Naive thymus-derived CD4-positive, alpha-beta T cell (primary cell): ENCODE measurements at regions of chr4 and their contacts with region 1.

Region 1: GRCh38 chr4:26860157-26860921 is at the start of gene STIM2:
- DNase-seq: peak; percentile 95 to 100 (median 99)
- ATAC-seq: peak; percentile 80
- H3K4me3 ChIP-seq: peak within 1 kb of the TSS; percentile 77
- H3K4me3 Mint-ChIP-seq: peak within 1 kb of the TSS; percentile 95 to 100 (median 98)
- H3K27ac ChIP-seq: peak within 1 kb of the TSS; percentile 91
- H3K27ac Mint-ChIP-seq: peak within 1 kb of the TSS; percentile 95 to 99 (median 98)
- H3K4me1 ChIP-seq: peaks cover 46 to 48% of the 10 kb centered on the region in 2 donors
- H3K4me1 Mint-ChIP-seq: peaks cover 47 to 71% (median 66%) of the 10 kb centered on the region in 7 donors
- H3K27me3 ChIP-seq: no peaks in the 10 kb centered on the region
- H3K27me3 Mint-ChIP-seq: peaks cover 0 to 3% (median 0%) of the 10 kb centered on the region in 5 donors
- total RNA-seq, gene STIM2: 61.7 to 103 (median 74.5) TPM

Region 2: DNA sequence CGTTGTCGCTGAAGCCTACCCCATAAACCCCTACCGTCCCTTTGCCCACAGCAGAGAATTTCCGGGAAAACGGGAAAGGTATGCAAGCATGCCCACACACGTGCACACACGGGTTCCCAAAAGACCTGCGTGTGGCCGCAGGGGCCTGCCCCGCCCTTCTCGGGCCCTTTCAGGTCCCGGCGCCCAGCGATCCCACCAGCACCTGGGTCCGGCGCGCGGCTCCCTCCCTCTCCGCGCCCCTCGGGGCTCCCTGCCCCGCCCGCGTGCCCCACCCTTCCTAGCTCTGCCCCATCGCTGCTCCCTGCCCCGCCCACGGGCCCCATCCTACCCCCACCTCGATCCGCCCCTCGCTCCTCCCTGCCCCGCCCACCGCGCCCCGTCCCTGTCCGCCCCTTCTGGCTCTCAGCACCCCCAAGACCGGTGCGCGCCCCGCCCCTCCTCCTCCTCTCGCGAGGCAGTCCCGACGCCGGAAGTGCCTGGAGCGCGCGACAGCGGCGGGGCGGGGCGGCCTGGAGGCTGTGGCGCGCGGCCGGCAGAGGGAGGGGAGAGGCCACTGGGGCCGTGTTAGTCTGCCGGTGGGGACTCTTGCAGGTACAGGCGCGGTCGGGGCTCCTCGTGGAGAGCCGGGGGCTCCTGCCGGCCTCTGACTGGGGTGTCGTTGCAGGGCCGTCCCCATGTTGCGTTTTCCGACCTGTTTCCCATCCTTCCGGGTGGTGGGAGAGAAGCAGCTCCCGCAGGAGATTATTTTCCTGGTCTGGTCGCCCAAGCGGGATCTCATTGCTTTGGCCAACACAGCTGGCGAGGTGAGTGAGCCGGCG is 1483.4 kb before region 1 on chr4 and contains the start of gene ANAPC4:
- CTCF ChIA-PET with region 1: no interaction called
- POLR2A ChIA-PET with region 1: no interaction called
- intact Hi-C with region 1: loop called (anchors 1 to 2 kb)
- DNase-seq: peak; percentile 85 to 97 (median 92)
- ATAC-seq: peak; percentile 97
- H3K4me3 ChIP-seq: peak within 1 kb of the TSS; percentile 96
- H3K4me3 Mint-ChIP-seq: peak within 1 kb of the TSS in 2 of 10 donors; percentile 78 to 83
- H3K27ac ChIP-seq: peak within 1 kb of the TSS; percentile 76
- H3K27ac Mint-ChIP-seq: peak within 1 kb of the TSS in 7 of 9 donors; percentile 64 to 93 (median 83)
- H3K4me1 ChIP-seq: peaks cover 11 to 17% of the 10 kb centered on the region in 2 donors
- H3K4me1 Mint-ChIP-seq: peaks cover 0 to 18% (median 13%) of the 10 kb centered on the region in 7 donors
- H3K27me3 ChIP-seq: no peaks in the 10 kb centered on the region
- H3K27me3 Mint-ChIP-seq: no peaks in the 10 kb centered on the region
- total RNA-seq, gene ANAPC4: 40.6 to 55.3 (median 50.4) TPM

Region 3: DNA sequence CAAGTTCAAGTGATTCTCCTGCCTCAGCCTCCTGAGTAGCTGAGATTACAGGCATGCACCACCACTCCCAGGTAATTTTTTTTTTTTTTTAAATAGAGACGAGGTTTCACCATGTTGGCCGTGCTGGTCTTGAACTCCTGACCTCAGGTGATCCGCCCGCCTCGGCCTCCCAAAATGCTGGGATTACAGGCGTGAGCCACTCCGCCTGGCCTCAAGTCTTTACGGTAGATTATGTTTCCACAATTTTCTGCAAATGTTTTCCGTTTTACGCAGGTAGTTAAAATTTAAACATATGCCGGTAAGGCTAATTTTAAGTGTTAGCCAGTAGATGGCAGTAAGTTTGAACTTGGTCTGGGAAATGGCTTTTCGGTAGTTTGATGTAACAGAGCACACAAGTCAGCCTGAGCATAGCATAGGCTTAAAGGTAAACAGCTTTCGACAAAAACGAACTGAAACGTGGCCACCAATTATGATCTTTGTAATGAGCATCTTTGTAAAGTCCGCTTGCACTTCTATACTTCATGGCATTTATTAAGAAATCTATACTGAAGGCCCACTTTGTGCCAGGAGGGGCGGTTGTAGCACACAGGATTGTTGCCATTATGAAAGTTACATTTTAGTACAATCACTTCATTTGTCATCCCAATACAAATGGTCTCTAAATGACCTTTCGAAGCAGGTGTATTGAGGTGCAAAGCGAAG is 401.1 kb before region 1 on chr4:
- CTCF ChIA-PET with region 1: no interaction called
- POLR2A ChIA-PET with region 1: no interaction called
- intact Hi-C with region 1: loop called in 1 of 2 experiments (anchors 2 kb)
- DNase-seq: peak in 7 of 9 donors; percentile 15 to 62 (median 51)
- ATAC-seq: peak; percentile 62
- H3K4me3 ChIP-seq: no peak overlapping the region
- H3K4me3 Mint-ChIP-seq: peak overlapping the region in 9 of 10 donors; percentile 21 to 82 (median 61)
- H3K27ac ChIP-seq: no peak overlapping the region
- H3K27ac Mint-ChIP-seq: peak overlapping the region in 5 of 9 donors; percentile 5 to 68 (median 60)
- H3K4me1 ChIP-seq: peaks cover 0 to 16% of the 10 kb centered on the region in 2 donors
- H3K4me1 Mint-ChIP-seq: peaks cover 0 to 30% (median 20%) of the 10 kb centered on the region in 7 donors
- H3K27me3 ChIP-seq: no peaks in the 10 kb centered on the region
- H3K27me3 Mint-ChIP-seq: no peaks in the 10 kb centered on the region

Region 4: DNA sequence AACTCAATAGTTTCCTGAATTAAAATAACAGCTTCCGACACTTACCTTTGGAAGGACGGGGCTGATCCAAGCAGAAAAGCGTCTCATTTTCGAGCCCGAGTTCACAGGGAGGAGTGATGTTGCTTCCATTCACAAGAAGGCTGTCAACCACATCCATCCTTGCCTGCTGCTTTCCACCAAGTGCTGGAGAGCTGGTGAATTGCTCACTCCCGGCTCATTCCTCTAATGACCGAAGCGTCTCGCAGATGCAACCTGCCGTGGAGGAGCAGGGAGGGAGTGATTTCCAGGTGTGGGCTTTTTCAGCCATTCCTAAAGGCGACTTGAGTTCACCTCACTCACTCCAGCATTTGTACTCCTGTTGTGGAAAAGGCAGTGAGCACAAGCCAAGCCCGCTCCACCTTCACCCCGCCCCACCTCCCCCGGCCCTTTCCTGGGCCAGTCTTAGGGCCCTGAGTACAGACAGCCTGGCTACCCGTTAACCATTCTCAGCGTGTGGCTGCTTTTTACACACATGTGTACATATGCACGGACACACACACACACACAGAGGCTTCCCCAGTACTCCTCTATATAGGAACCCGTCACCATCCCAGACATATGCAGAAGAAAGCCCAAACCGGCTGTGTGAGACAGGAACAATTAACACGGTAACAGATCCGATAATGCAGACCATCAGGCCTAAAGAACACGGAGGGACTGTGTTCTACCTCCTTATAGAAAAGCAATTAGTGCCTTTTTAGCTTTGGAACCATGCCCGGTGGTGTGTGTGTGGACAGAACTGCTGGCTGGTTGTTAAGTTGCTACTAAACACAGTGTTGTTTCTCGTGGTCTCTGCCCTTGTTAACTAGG is 370.0 kb before region 1 on chr4 and contains the start of gene CCKAR:
- CTCF ChIA-PET with region 1: no interaction called
- POLR2A ChIA-PET with region 1: no interaction called
- intact Hi-C with region 1: no loop called
- DNase-seq: no peak
- ATAC-seq: no peak
- H3K4me3 ChIP-seq: no peak within 1 kb of the TSS
- H3K4me3 Mint-ChIP-seq: no peak within 1 kb of the TSS
- H3K27ac ChIP-seq: no peak within 1 kb of the TSS
- H3K27ac Mint-ChIP-seq: no peak within 1 kb of the TSS
- H3K4me1 ChIP-seq: no peaks in the 10 kb centered on the region
- H3K4me1 Mint-ChIP-seq: no peaks in the 10 kb centered on the region
- H3K27me3 ChIP-seq: no peaks in the 10 kb centered on the region
- H3K27me3 Mint-ChIP-seq: peaks cover 7 to 34% (median 23%) of the 10 kb centered on the region in 5 donors
- total RNA-seq, gene CCKAR: not detected

Region 5: DNA sequence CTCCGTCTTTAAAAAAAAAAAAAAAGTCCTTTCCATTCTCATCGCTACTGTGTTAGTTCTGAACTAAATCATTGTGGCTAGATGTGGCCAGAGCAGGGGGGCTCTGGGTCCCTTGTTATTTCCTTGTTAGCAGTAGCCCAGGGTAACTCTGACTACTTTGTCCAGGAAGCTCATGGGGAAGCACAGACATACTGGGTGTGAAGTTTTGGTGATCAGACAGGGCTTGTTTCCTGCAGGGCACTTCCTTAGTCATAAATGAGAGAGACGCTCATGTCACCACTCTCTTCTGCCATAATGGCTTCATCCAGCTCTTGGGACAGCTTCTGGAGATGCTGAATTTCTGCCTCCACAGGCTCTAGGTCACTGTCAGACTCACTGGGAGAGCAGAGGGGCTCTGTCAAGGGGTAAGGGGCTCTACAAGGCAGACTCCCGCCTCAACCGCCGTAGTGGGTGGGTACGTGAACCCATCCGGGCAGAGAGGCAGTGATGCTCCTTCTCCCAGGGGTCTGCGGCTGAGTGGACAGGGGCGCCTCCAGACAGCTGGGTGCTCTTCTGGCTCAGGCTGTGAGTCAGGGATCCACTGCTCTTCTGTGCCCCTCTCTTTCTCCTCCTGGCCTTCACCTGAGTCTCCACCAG is 13.2 kb after region 1 on chr4:
- CTCF ChIA-PET with region 1: interaction called, 5 read pairs
- POLR2A ChIA-PET with region 1: interaction called, 64 read pairs
- intact Hi-C with region 1: loop called (anchors 1 kb)
- DNase-seq: peak in 5 of 9 donors; percentile 41 to 55 (median 49)
- ATAC-seq: peak; percentile 94
- H3K4me3 ChIP-seq: peak overlapping the region; percentile 11
- H3K4me3 Mint-ChIP-seq: peak overlapping the region in 9 of 10 donors; percentile 52 to 82 (median 74)
- H3K27ac ChIP-seq: peak overlapping the region; percentile 45
- H3K27ac Mint-ChIP-seq: peak overlapping the region in 8 of 9 donors; percentile 72 to 92 (median 82)
- H3K4me1 ChIP-seq: peaks cover 46 to 52% of the 10 kb centered on the region in 2 donors
- H3K4me1 Mint-ChIP-seq: peaks cover 52 to 95% (median 90%) of the 10 kb centered on the region in 7 donors
- H3K27me3 ChIP-seq: no peaks in the 10 kb centered on the region
- H3K27me3 Mint-ChIP-seq: no peaks in the 10 kb centered on the region

Region 6: GRCh38 chr4:26916195-26916594 is 55.9 kb after region 1 on chr4:
- CTCF ChIA-PET with region 1: no interaction called
- POLR2A ChIA-PET with region 1: interaction called, 5 read pairs
- intact Hi-C with region 1: loop called in 1 of 2 experiments (anchors 1 kb)
- DNase-seq: peak in 3 of 9 donors; percentile 5 to 18 (median 6)
- ATAC-seq: no peak
- H3K4me3 ChIP-seq: no peak overlapping the region
- H3K4me3 Mint-ChIP-seq: peak overlapping the region in 3 of 10 donors; percentile 1 to 38 (median 1)
- H3K27ac ChIP-seq: no peak overlapping the region
- H3K27ac Mint-ChIP-seq: peak overlapping the region in 7 of 9 donors; percentile 3 to 78 (median 57)
- H3K4me1 ChIP-seq: peaks cover 13 to 42% of the 10 kb centered on the region in 2 donors
- H3K4me1 Mint-ChIP-seq: peaks cover 35 to 86% (median 63%) of the 10 kb centered on the region in 7 donors
- H3K27me3 ChIP-seq: no peaks in the 10 kb centered on the region
- H3K27me3 Mint-ChIP-seq: no peaks in the 10 kb centered on the region

Region 7: GRCh38 chr4:26992657-26993361 is 132.5 kb after region 1 on chr4:
- CTCF ChIA-PET with region 1: interaction called, 3 read pairs
- POLR2A ChIA-PET with region 1: interaction called, 14 read pairs
- intact Hi-C with region 1: loop called in 1 of 2 experiments (anchors 2 kb)
- DNase-seq: no peak
- ATAC-seq: peak; percentile 54
- H3K4me3 ChIP-seq: no peak overlapping the region
- H3K4me3 Mint-ChIP-seq: no peak overlapping the region
- H3K27ac ChIP-seq: no peak overlapping the region
- H3K27ac Mint-ChIP-seq: no peak overlapping the region
- H3K4me1 ChIP-seq: peaks cover 11 to 32% of the 10 kb centered on the region in 2 donors
- H3K4me1 Mint-ChIP-seq: peaks cover 12 to 39% (median 27%) of the 10 kb centered on the region in 7 donors
- H3K27me3 ChIP-seq: no peaks in the 10 kb centered on the region
- H3K27me3 Mint-ChIP-seq: no peaks in the 10 kb centered on the region